SK-N-SH (cell line): ENCODE measurements at regions of chr10 and their contacts with region 1.

Region 1: DNA sequence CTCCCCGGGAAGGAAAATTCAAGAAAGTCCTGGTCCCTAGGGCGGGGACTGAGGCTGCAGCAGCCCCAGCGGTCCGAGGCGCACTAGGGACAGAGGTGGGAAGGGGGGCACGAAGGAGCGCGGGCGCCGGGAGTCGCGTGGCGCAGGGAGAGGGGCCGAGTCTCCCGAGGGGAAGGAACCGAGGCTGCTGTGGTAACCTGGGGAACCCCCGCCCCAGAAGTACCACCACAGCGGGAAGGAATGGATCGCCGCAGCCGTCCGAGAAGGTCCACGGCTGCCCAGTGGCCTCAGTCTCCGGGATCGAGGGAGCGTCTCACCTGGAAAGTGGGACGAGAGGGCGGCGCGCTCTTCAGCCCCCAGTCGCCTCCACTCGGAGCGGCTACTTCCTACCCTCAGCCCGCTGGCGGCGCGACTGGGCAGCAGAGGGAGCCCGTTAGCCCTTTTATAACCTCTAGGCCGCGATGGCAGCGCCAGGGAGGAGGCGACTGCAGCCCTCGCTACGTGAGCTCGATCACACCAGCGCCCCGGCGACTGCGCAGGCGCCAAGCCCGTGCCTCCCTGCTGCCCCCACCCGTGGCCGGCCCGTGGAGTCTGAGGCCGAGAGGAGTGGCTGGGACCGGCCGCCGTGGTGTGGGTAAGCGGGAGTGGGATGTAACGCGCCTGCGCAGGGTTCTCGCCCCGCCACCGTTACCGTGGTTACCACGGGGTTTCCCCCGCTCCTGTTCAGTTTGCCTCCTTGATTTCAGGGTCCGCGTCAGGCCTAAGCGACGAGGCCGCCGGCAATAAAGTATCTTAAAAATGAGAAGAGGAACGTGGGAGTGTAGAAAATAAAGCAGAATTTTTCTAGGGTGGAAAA is at the start of gene P4HA1:
- DNase-seq: peak; percentile 98
- H3K4me3 ChIP-seq: peak within 1 kb of the TSS; percentile 84 to 87
- H3K27ac ChIP-seq: peak within 1 kb of the TSS; percentile 96 to 97
- H3K4me1 ChIP-seq: peaks cover 4% of the 10 kb centered on the region in 2 experiments; a peak in 3 of 4 replicates
- H3K27me3 ChIP-seq: no peaks in the 10 kb centered on the region
- CTCF ChIP-seq: peak; percentile 65
- EP300 ChIP-seq: 0 out of 4 replicates have a peak, but pooled peaks of 1 of the 2 experiments have one; percentile 7
- RAD21 ChIP-seq: peak; percentile 68
- polyA plus RNA-seq, gene P4HA1: 34.8 and 52.0 TPM in 2 replicates

Region 2: GRCh38 chr10:73054286-73054685 is 42.4 kb before region 1 on chr10:
- CTCF ChIA-PET with region 1: no interaction called
- POLR2A ChIA-PET with region 1: no interaction called
- DNase-seq: no peak
- H3K4me3 ChIP-seq: no peak overlapping the region
- H3K27ac ChIP-seq: no peak overlapping the region
- H3K4me1 ChIP-seq: no peaks in the 10 kb centered on the region
- H3K27me3 ChIP-seq: no peaks in the 10 kb centered on the region
- CTCF ChIP-seq: no peak
- EP300 ChIP-seq: no peak
- RAD21 ChIP-seq: no peak

Region 3: GRCh38 chr10:73110345-73110849 is 13.7 kb after region 1 on chr10 and contains the start of gene NUDT13:
- CTCF ChIA-PET with region 1: interaction called, 13 read pairs
- POLR2A ChIA-PET with region 1: interaction called, 16 read pairs
- DNase-seq: peak; percentile 79
- H3K4me3 ChIP-seq: peak within 1 kb of the TSS; percentile 57 to 79
- H3K27ac ChIP-seq: peak within 1 kb of the TSS; percentile 94 to 96
- H3K4me1 ChIP-seq: peaks cover 0 to 12% of the 10 kb centered on the region in 2 experiments; a peak in 1 of 4 replicates
- H3K27me3 ChIP-seq: no peaks in the 10 kb centered on the region
- CTCF ChIP-seq: no peak
- EP300 ChIP-seq: no peak
- RAD21 ChIP-seq: no peak
- polyA plus RNA-seq, gene NUDT13: 3.4 and 6.0 TPM in 2 replicates